ENCODE measurements at regions of chrX and their contacts with region 1.

Region 1: GRCh38 chrX:40651620-40652223 is 4.4 kb upstream of the CXorf38 start:
- DNase-seq: peak in 2 of 3 donors; percentile 52 to 63
- ATAC-seq: peak; percentile 46 to 57 (median 51)
- H3K4me3 ChIP-seq: no peak overlapping the region
- H3K27ac ChIP-seq: no peak overlapping the region
- H3K4me1 ChIP-seq: peaks cover 0 to 5% (median 2%) of the 10 kb centered on the region in 4 donors
- H3K27me3 ChIP-seq: no peaks in the 10 kb centered on the region
- CTCF ChIP-seq: peak; percentile 84 to 90 (median 86)
- POLR2A ChIP-seq: no peak

Region 2: GRCh38 chrX:40792433-40792832 is 140.7 kb after region 1 on chrX:
- intact Hi-C with region 1: loop called in 1 of 2 experiments (anchors 10 kb)
- DNase-seq: no peak
- ATAC-seq: no peak
- H3K4me3 ChIP-seq: no peak overlapping the region
- H3K27ac ChIP-seq: no peak overlapping the region
- H3K4me1 ChIP-seq: peaks cover 0 to 4% (median 0%) of the 10 kb centered on the region in 4 donors
- H3K27me3 ChIP-seq: no peaks in the 10 kb centered on the region
- CTCF ChIP-seq: no peak
- POLR2A ChIP-seq: no peak

Measured in right lobe of liver (tissue), 6 donors.